OCI-LY7 (cell line): ENCODE measurements at regions of chr21 and their contacts with region 1.

Region 1: GRCh38 chr21:14737922-14738321 is 191.8 kb upstream of the SAMSN1 start:
- DNase-seq: peak; percentile 78
- H3K4me3 ChIP-seq: no peak overlapping the region
- H3K27ac ChIP-seq: no peak overlapping the region
- H3K4me1 ChIP-seq: peaks cover 2% of the 10 kb centered on the region
- CTCF ChIP-seq: peak; percentile 97

Region 2: GRCh38 chr21:14454016-14455009 is 283.6 kb before region 1 on chr21:
- CTCF ChIA-PET with region 1: no interaction called
- POLR2A ChIA-PET with region 1: interaction called, 5 read pairs
- intact Hi-C with region 1: loop called (anchors 5 kb)
- DNase-seq: no peak
- H3K4me3 ChIP-seq: no peak overlapping the region
- H3K27ac ChIP-seq: no peak overlapping the region
- H3K4me1 ChIP-seq: no peaks in the 10 kb centered on the region
- CTCF ChIP-seq: no peak

Region 3: GRCh38 chr21:14620152-14620551 is 117.8 kb before region 1 on chr21:
- CTCF ChIA-PET with region 1: no interaction called
- POLR2A ChIA-PET with region 1: no interaction called
- intact Hi-C with region 1: loop called (anchors 5 kb)
- DNase-seq: peak; percentile 26
- H3K4me3 ChIP-seq: no peak overlapping the region
- H3K27ac ChIP-seq: no peak overlapping the region
- H3K4me1 ChIP-seq: peaks cover 29% of the 10 kb centered on the region
- CTCF ChIP-seq: no peak

Region 4: DNA sequence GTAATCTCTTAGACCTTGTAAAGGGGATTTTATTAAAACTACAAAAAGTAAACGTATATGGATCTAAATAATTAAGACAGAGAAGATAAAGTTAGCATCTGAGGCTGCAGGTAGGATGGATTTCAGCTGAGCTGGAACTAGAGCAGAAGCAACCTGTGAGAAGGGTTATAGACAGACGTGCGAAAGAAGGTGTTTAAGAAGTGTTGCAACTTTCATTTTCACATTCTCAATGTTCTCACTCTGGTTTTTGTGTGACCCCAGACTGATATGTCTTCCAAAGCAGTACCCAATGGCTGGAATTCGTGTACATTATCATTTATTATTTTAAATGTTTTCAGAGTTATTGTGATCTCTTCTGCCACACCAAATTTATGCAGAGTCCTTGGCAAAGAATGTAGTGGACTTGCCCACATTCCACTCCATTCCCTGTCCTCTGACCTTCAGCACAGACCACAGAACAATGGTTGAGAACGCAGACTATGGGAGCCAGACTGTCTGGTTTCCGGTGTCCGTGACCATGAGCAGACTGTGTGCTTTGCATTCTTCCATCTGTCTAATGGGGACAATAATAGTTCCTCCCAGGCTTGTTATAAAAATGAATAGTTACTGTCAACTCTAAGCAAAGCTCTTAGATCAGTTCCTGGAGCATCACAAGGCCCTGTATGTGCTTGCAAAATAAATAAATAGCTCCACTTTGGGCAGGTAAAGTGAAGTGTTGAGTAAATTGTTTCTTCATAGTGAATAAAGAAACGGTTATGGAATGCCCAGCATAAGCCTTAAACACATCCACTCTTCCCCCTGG is 51.3 kb before region 1 on chr21:
- CTCF ChIA-PET with region 1: no interaction called
- POLR2A ChIA-PET with region 1: interaction called, 6 read pairs
- intact Hi-C with region 1: loop called (anchors 5 kb)
- DNase-seq: peak; percentile 42
- H3K4me3 ChIP-seq: peak overlapping the region; percentile 41
- H3K27ac ChIP-seq: peak overlapping the region; percentile 71
- H3K4me1 ChIP-seq: peaks cover 83% of the 10 kb centered on the region
- CTCF ChIP-seq: no peak